Cardiac septum (tissue), 1 donor: ENCODE measurements at regions of chr2 and their contacts with region 1.

Region 1: DNA sequence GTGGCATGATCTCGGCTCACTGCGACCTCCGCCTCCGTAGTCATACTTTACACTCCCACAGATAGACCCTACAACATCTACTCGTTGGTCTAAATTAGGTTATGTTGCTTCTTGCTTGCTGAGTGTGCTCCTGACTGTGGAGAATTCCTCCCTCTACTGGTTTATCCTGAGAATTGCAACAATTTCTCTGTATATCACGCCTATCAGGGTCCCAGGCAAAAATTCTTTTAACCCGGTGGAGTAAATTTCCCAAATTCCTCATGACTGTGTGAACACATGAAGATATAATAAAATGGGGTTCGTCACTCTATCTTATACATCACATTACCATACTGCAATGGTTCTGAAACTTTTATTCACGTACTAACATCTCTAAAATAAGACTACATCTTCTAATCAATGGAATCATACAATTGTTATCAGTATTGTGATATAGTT is 156.7 kb downstream of the EVA1A start:
- DNase-seq: no peak

Region 2: GRCh38 chr2:74690571-74690970 is 713.4 kb before region 1 on chr2:
- intact Hi-C with region 1: loop called (anchors 10 kb)
- DNase-seq: no peak

Region 3: GRCh38 chr2:74919827-74920226 is 484.2 kb before region 1 on chr2:
- intact Hi-C with region 1: loop called (anchors 5 kb)
- DNase-seq: peak; percentile 87

Region 4: GRCh38 chr2:75064691-75065396 is 339.2 kb before region 1 on chr2:
- intact Hi-C with region 1: loop called (anchors 5 kb)
- DNase-seq: no peak